ENCODE measurements at regions of chr20 and their contacts with region 1.

Region 1: DNA sequence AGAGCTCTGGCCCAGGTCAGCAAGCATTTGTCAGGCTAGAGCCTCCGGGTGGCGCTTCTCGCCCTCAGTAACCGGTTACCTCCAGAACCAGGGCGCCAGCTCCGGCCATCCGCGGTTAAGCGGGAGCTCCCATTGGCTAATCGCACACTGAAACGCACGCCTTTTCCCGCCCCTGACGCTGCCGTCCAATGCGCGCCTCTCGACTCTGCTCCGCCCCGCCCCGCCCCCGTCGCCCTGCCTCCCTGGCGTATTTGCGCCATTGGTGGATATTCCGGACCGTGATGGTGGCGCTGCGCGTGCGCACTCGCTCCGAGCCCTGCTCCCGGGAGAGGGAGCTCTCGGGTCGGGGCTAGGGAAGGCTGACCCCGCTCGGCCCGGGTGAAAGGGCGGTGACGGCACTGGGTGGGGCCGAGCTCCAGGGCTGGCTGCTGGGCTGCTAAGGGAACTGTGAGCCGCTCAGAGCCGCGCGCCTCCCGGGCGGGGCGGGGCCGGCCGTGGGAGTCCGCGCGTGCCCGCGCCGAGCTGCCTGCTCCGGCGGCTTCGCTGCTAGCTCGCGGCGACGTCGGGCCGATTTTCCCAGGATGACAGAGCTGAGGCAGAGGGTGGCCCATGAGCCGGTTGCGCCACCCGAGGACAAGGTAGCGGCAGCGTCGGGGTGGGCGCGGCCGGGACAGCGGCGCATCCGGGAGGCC is at the start of gene CDS2:
- DNase-seq: peak; percentile 100
- H3K4me3 ChIP-seq: peak within 1 kb of the TSS; percentile 55 to 87 (median 73)
- H3K27ac ChIP-seq: peak within 1 kb of the TSS; percentile 63
- H3K4me1 ChIP-seq: peaks cover 10% of the 10 kb centered on the region
- H3K27me3 ChIP-seq: no peaks in the 10 kb centered on the region
- CTCF ChIP-seq: peak; percentile 28 to 59
- POLR2A ChIP-seq: peak; percentile 19
- total RNA-seq, gene CDS2: 48.1 and 49.0 TPM in 2 replicates

Region 2: GRCh38 chr20:4633780-4634179 is 492.9 kb before region 1 on chr20:
- CTCF ChIA-PET with region 1: no interaction called
- POLR2A ChIA-PET with region 1: no interaction called
- dilution Hi-C with region 1: no loop called
- intact Hi-C with region 1: no loop called
- DNase-seq: peak; percentile 88
- H3K4me3 ChIP-seq: no peak overlapping the region
- H3K27ac ChIP-seq: peak overlapping the region; percentile 80
- H3K4me1 ChIP-seq: peaks cover 16% of the 10 kb centered on the region
- H3K27me3 ChIP-seq: peaks cover 0 to 2% of the 10 kb centered on the region in 2 experiments
- CTCF ChIP-seq: no peak
- POLR2A ChIP-seq: no peak

Region 3: GRCh38 chr20:5008759-5009158 is 117.9 kb before region 1 on chr20:
- CTCF ChIA-PET with region 1: no interaction called
- POLR2A ChIA-PET with region 1: no interaction called
- dilution Hi-C with region 1: no loop called
- intact Hi-C with region 1: no loop called
- DNase-seq: no peak
- H3K4me3 ChIP-seq: no peak overlapping the region
- H3K27ac ChIP-seq: no peak overlapping the region
- H3K4me1 ChIP-seq: peaks cover 7% of the 10 kb centered on the region
- H3K27me3 ChIP-seq: peaks cover 0 to 2% of the 10 kb centered on the region in 2 experiments
- CTCF ChIP-seq: no peak
- POLR2A ChIP-seq: no peak

Region 4: GRCh38 chr20:5041433-5041832 is 85.2 kb before region 1 on chr20:
- CTCF ChIA-PET with region 1: no interaction called
- POLR2A ChIA-PET with region 1: no interaction called
- dilution Hi-C with region 1: no loop called
- intact Hi-C with region 1: no loop called
- DNase-seq: no peak
- H3K4me3 ChIP-seq: no peak overlapping the region
- H3K27ac ChIP-seq: no peak overlapping the region
- H3K4me1 ChIP-seq: no peaks in the 10 kb centered on the region
- H3K27me3 ChIP-seq: no peaks in the 10 kb centered on the region
- CTCF ChIP-seq: no peak
- POLR2A ChIP-seq: no peak

Region 5: GRCh38 chr20:5109276-5109675 is 17.4 kb before region 1 on chr20:
- CTCF ChIA-PET with region 1: no interaction called
- POLR2A ChIA-PET with region 1: no interaction called
- dilution Hi-C with region 1: no loop called
- intact Hi-C with region 1: no loop called
- DNase-seq: no peak
- H3K4me3 ChIP-seq: no peak overlapping the region
- H3K27ac ChIP-seq: no peak overlapping the region
- H3K4me1 ChIP-seq: peaks cover 15% of the 10 kb centered on the region
- H3K27me3 ChIP-seq: no peaks in the 10 kb centered on the region
- CTCF ChIP-seq: no peak
- POLR2A ChIP-seq: no peak

Region 6: GRCh38 chr20:5168651-5169396 is 42.2 kb after region 1 on chr20:
- CTCF ChIA-PET with region 1: interaction called, 31 read pairs
- POLR2A ChIA-PET with region 1: interaction called, 7 read pairs
- dilution Hi-C with region 1: no loop called
- intact Hi-C with region 1: loop called (anchors 1 kb)
- DNase-seq: peak; percentile 72
- H3K4me3 ChIP-seq: no peak overlapping the region
- H3K27ac ChIP-seq: peak overlapping the region; percentile 44
- H3K4me1 ChIP-seq: peaks cover 19% of the 10 kb centered on the region
- H3K27me3 ChIP-seq: no peaks in the 10 kb centered on the region
- CTCF ChIP-seq: no peak
- POLR2A ChIP-seq: no peak

Region 7: DNA sequence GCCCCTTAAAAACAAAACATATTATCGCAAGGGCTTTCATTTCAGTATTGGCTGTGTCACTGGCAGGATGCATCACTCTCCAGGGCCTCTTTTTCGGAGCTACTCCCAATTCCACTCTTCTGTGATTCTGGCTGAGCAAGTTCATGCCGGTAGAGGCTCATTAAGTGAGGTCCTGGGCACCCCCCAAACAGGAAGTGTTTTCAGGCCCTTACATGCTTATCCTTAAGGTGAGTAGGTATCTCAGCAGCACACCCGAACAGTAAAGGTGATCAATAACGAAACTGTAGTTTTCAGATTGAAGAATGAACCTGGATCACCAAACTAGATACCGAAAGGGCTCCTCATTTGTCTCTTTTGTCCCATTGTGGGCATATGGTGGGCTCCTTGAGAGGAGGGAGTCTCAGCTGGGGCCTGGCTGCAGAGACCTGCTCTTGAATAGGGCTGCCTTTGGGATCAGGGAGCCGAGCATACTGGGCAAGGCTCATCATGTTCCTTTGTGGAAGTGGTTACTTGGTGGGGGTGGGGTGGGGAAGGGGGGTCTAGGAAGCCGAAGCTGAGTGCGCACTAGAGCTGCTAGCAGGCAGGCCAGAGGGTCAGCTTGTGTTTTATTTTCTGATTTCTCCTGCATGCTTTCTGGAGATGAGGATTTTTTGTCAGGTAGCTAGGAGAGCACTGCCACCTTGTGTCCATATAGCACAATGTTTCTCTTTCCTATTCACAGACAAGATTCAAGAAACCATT is 65.3 kb after region 1 on chr20:
- CTCF ChIA-PET with region 1: interaction called, 371 read pairs
- POLR2A ChIA-PET with region 1: interaction called, 27 read pairs
- dilution Hi-C with region 1: no loop called
- intact Hi-C with region 1: loop called (anchors 1 kb)
- DNase-seq: peak; percentile 79
- H3K4me3 ChIP-seq: no peak overlapping the region
- H3K27ac ChIP-seq: no peak overlapping the region
- H3K4me1 ChIP-seq: peaks cover 3% of the 10 kb centered on the region
- H3K27me3 ChIP-seq: no peaks in the 10 kb centered on the region
- CTCF ChIP-seq: peak; percentile 59 to 64
- POLR2A ChIP-seq: no peak

Region 8: DNA sequence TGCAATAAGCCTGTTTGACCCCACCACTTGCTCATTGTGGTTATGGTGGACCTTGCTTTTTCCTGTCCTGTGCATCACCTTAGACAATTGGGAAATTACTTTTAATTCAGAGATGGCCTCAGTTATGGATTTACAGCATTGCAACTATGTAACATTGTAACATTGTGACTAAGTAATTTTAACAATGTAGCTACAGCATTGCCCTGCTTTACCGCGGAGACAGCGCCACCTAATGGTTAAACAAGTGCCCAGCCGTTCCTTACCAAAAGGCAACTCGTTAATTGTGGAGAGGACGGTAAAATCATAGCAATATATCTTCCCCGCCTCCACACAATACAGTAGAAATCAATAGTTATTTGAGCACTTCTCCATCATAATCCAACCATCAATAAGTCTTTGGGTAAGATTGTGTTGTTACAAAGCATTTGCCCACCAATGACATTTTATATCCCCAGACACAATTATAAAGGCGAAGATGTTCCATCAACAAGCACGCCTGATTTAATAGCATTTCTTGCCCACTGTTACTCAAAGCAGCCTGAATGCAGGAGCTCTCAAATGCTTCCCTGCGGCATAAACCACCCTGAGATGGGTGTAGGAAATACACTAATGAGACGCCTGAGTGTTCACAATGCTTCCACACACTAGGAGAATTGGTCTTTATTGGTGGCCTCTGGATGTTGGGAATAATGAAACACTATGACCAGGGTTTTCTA is 96.4 kb after region 1 on chr20:
- CTCF ChIA-PET with region 1: interaction called, 37 read pairs
- POLR2A ChIA-PET with region 1: interaction called, 3 read pairs
- dilution Hi-C with region 1: no loop called
- intact Hi-C with region 1: loop called (anchors 1 kb)
- DNase-seq: peak; percentile 64
- H3K4me3 ChIP-seq: no peak overlapping the region
- H3K27ac ChIP-seq: no peak overlapping the region
- H3K4me1 ChIP-seq: no peaks in the 10 kb centered on the region
- H3K27me3 ChIP-seq: peaks cover 0 to 3% of the 10 kb centered on the region in 2 experiments
- CTCF ChIP-seq: peak; percentile 84 to 93
- POLR2A ChIP-seq: no peak